Right ventricle myocardium superior (tissue), 1 donor: ENCODE measurements at regions of chr16 and their contacts with region 1.

Region 1: DNA sequence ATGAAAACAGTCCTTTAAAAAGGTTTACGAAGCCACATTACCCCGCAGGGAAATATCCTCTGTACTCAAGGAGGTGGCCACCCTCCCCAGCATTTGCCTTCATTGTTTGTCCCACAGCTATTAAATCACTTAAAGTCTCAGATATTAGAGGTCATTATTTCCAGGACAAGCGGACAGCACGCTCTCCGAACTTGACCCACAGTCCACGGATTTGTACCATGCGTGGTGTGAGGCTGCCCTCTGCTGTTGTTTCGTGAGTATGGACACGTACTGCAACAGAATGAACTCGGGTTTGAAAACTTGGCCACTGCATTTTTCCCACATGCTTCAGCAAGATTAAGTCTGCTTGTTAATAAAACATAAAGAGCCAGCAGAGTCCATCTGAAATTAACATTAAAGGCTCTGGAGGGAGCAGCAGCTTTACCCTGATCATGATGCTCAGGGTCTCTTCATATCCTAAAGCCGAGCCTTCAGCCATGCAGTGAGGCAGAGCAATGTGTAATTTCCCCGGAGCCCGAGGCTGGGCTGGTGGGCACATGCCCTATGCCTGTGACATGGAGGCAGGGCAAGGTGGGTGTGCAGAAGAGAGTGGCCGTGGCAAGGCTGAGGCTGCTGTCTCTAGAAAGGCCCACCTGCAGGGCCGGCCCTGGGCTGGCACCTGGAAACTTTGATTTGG is 19.7 kb downstream of the MEAK7 start:
- DNase-seq: peak; percentile 76
- ATAC-seq: peak; percentile 88

Region 2: DNA sequence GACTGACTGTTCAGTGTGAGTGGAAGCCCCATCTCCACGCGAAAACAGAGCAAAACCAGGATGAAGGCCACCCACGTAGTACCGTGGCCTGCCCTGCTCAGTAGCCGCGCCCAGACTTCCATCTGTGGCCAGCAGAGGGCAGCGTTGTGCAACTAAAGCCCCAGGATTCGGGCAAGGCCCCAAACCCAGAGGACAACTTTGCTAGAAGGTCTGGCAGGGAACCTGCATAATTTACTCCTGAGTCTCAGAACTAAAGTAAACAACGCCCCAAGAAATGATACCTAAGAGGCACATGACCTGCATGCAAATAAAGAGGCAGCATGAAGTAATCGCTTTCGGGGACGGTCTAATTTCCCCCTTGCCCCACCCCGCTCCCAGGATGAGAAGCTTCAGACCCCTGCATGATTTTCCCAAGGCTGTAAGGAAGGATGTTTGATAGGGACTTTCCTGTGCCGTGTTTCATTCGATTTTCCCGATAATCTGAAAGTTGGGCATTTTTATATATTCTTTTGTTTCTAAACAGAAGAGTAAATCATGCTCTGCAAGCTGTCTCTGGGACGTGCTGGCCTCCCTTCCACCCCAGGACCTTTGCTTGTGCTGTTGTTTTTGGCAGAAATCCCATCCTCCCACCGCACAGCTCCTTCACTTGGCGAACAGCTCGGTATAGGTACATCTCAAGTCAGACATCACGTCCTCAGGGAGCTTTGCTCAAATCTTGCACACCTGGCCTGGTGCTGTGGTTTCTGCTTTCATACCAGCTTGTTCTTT is 658.4 kb before region 1 on chr16:
- intact Hi-C with region 1: loop called (anchors 10 kb)
- DNase-seq: peak; percentile 90
- ATAC-seq: peak; percentile 96

Region 3: GRCh38 chr16:83967806-83968305 is 516.9 kb before region 1 on chr16 and contains the start of gene NECAB2:
- intact Hi-C with region 1: loop called (anchors 5 kb)
- DNase-seq: peak; percentile 76
- ATAC-seq: peak; percentile 78
- total RNA-seq, gene NECAB2: 0.46 TPM

Region 4: GRCh38 chr16:84277237-84277823 is 207.4 kb before region 1 on chr16:
- intact Hi-C with region 1: loop called (anchors 5 kb)
- DNase-seq: peak; percentile 82
- ATAC-seq: peak; percentile 77